ENCODE measurements at regions of chr4 and their contacts with region 1.

Region 1: GRCh38 chr4:37802068-37802666 is 24.3 kb upstream of the PGM2 start:
- DNase-seq: peak; percentile 63 to 75
- H3K4me3 ChIP-seq: no peak overlapping the region
- H3K27ac ChIP-seq: no peak overlapping the region
- H3K4me1 ChIP-seq: peaks cover 6% of the 10 kb centered on the region; the same call in 1 of the 2 replicates
- H3K27me3 ChIP-seq: no peaks in the 10 kb centered on the region
- CTCF ChIP-seq: peak; percentile 65

Region 2: DNA sequence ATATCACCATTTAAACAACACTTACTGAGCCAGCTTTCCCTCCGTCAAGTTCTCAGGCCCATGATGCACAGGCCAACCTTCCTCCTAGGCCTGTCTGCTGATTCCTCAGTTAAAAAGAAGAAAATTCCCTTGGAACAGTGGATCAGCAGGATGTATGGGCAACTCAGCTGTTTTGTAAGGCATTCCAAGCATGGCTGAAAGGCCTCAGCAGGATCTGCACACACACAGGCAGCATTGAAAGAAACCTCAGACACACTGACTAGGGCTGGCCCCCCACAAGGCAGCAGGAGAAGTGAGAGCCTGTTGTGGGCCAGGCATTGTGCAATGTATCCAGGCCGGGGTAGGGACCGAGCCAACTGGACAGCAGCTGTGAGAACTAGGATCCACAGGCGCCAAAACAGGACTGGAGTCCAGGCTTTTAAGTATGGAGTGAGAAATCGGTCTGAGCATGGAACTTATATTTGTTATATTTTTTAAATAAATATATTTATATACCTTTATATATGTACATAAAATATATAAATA is 386.3 kb before region 1 on chr4:
- CTCF ChIA-PET with region 1: no interaction called
- POLR2A ChIA-PET with region 1: no interaction called
- intact Hi-C with region 1: no loop called
- DNase-seq: no peak
- H3K4me3 ChIP-seq: no peak overlapping the region
- H3K27ac ChIP-seq: no peak overlapping the region
- H3K4me1 ChIP-seq: no peaks in the 10 kb centered on the region
- H3K27me3 ChIP-seq: no peaks in the 10 kb centered on the region
- CTCF ChIP-seq: no peak

Region 3: DNA sequence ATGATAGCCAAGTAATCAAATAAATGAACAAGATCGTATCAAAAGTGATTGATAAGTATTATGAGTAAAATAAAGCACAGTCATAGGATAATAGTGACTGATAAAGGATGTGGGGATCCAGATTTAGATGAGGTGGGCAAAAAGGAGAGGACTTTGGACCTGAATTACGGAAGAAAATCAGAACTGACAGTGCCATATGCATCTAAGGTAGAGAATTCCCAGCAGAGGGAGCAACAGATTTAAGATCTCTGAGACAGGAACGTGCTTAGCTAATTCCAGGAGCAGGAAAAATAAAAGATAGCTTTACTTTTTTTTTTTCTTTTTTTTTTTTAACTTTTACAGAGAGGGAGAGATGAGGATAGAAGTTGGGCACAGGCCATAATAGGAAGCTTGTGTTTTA is 367.7 kb before region 1 on chr4:
- CTCF ChIA-PET with region 1: interaction called, 4 read pairs
- POLR2A ChIA-PET with region 1: no interaction called
- intact Hi-C with region 1: loop called (anchors 5 kb)
- DNase-seq: no peak
- H3K4me3 ChIP-seq: no peak overlapping the region
- H3K27ac ChIP-seq: no peak overlapping the region
- H3K4me1 ChIP-seq: peaks cover 12% of the 10 kb centered on the region
- H3K27me3 ChIP-seq: no peaks in the 10 kb centered on the region
- CTCF ChIP-seq: peak; percentile 40

Region 4: DNA sequence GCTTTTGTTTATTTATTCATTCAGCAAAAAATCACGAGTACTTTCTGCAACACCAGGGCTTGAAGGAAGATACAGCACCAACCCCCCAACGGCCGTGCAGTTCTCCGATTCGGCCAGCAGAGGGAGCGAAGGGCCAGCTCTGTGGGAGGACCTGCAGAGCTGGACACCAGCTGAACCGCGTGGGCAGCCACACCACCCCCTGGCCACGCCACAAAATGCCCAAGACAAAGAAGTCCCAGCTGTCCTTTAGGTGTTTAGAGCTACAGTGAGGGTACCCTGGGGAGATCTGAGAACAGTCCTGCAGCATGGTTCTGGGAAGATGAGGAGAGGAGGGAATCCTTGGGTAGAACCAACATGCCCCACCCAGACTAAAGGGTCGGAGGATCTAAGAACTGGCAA is 199.1 kb before region 1 on chr4:
- CTCF ChIA-PET with region 1: interaction called, 25 read pairs
- POLR2A ChIA-PET with region 1: no interaction called
- intact Hi-C with region 1: loop called (anchors 1 kb)
- DNase-seq: peak; percentile 46 to 73
- H3K4me3 ChIP-seq: no peak overlapping the region
- H3K27ac ChIP-seq: no peak overlapping the region
- H3K4me1 ChIP-seq: peaks cover 9% of the 10 kb centered on the region
- H3K27me3 ChIP-seq: no peaks in the 10 kb centered on the region
- CTCF ChIP-seq: peak; percentile 98

Region 5: GRCh38 chr4:37686373-37687193 is 115.6 kb before region 1 on chr4 and contains the start of gene RELL1:
- CTCF ChIA-PET with region 1: no interaction called
- POLR2A ChIA-PET with region 1: no interaction called
- intact Hi-C with region 1: loop called (anchors 2 kb)
- DNase-seq: peak; percentile 94 to 100
- H3K4me3 ChIP-seq: peak within 1 kb of the TSS; percentile 77
- H3K27ac ChIP-seq: no peak within 1 kb of the TSS
- H3K4me1 ChIP-seq: peaks cover 12% of the 10 kb centered on the region; the same call in 1 of the 2 replicates
- H3K27me3 ChIP-seq: no peaks in the 10 kb centered on the region
- CTCF ChIP-seq: no peak
- total RNA-seq, gene RELL1: 11.9 and 18.5 TPM in 2 replicates

Region 6: GRCh38 chr4:37816769-37817168 is 14.6 kb after region 1 on chr4:
- CTCF ChIA-PET with region 1: no interaction called
- POLR2A ChIA-PET with region 1: no interaction called
- intact Hi-C with region 1: no loop called
- DNase-seq: no peak
- H3K4me3 ChIP-seq: no peak overlapping the region
- H3K27ac ChIP-seq: no peak overlapping the region
- H3K4me1 ChIP-seq: no peaks in the 10 kb centered on the region
- H3K27me3 ChIP-seq: no peaks in the 10 kb centered on the region
- CTCF ChIP-seq: no peak

Region 7: GRCh38 chr4:37891260-37892159 is 89.3 kb after region 1 on chr4:
- CTCF ChIA-PET with region 1: no interaction called
- POLR2A ChIA-PET with region 1: no interaction called
- intact Hi-C with region 1: loop called (anchors 2 kb)
- DNase-seq: peak in 1 of 2 experiments; percentile 49
- H3K4me3 ChIP-seq: peak overlapping the region; percentile 64
- H3K27ac ChIP-seq: no peak overlapping the region
- H3K4me1 ChIP-seq: no peaks in the 10 kb centered on the region; the same call in 1 of the 2 replicates
- H3K27me3 ChIP-seq: no peaks in the 10 kb centered on the region
- CTCF ChIP-seq: no peak

Region 8: DNA sequence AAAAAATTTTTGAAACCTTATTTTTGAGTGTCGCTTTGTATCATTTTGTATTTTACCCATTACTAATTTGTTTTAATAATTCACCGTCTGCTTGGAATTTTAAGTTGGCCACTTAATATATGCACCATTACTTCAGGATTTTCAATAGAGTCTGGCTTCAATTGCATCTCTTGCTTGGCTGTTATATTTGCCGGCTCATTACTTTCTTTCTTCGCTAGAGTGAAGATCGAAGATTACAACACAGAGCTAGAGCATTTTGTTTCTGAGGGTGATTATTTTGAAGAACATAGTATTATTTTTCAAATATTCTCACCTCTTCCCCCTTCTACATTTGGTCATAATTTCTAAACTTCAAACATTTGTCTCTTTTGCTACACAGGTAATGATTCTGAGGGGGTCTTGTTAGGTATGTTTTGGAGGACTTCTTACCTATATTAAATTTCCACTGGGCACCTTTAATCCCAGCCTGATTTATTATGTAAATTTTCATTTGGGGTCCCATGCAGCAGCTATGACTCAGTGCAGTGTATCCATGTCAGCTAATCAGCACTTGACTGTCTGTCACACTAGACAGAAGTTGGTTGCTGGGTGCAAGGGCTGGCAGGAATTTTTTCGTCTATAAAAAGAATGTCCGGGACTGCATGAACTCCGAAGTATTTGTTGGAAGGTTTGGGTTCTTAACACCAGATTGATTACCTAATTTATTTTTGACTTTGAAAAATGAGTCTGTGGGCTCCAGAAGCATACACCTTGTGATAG is 107.3 kb after region 1 on chr4:
- CTCF ChIA-PET with region 1: no interaction called
- POLR2A ChIA-PET with region 1: no interaction called
- intact Hi-C with region 1: no loop called
- DNase-seq: no peak
- H3K4me3 ChIP-seq: no peak overlapping the region
- H3K27ac ChIP-seq: no peak overlapping the region
- H3K4me1 ChIP-seq: no peaks in the 10 kb centered on the region
- H3K27me3 ChIP-seq: no peaks in the 10 kb centered on the region
- CTCF ChIP-seq: no peak

Region 9: GRCh38 chr4:38034986-38035882 is 233.1 kb after region 1 on chr4:
- CTCF ChIA-PET with region 1: no interaction called
- POLR2A ChIA-PET with region 1: no interaction called
- intact Hi-C with region 1: loop called (anchors 1 kb)
- DNase-seq: peak; percentile 10 to 48
- H3K4me3 ChIP-seq: no peak overlapping the region
- H3K27ac ChIP-seq: no peak overlapping the region
- H3K4me1 ChIP-seq: no peaks in the 10 kb centered on the region
- H3K27me3 ChIP-seq: no peaks in the 10 kb centered on the region
- CTCF ChIP-seq: peak; percentile 85

Region 10: GRCh38 chr4:38114386-38115150 is 312.4 kb after region 1 on chr4:
- CTCF ChIA-PET with region 1: no interaction called
- POLR2A ChIA-PET with region 1: no interaction called
- intact Hi-C with region 1: no loop called
- DNase-seq: no peak
- H3K4me3 ChIP-seq: no peak overlapping the region
- H3K27ac ChIP-seq: no peak overlapping the region
- H3K4me1 ChIP-seq: peaks cover 12% of the 10 kb centered on the region
- H3K27me3 ChIP-seq: no peaks in the 10 kb centered on the region
- CTCF ChIP-seq: no peak

Region 11: DNA sequence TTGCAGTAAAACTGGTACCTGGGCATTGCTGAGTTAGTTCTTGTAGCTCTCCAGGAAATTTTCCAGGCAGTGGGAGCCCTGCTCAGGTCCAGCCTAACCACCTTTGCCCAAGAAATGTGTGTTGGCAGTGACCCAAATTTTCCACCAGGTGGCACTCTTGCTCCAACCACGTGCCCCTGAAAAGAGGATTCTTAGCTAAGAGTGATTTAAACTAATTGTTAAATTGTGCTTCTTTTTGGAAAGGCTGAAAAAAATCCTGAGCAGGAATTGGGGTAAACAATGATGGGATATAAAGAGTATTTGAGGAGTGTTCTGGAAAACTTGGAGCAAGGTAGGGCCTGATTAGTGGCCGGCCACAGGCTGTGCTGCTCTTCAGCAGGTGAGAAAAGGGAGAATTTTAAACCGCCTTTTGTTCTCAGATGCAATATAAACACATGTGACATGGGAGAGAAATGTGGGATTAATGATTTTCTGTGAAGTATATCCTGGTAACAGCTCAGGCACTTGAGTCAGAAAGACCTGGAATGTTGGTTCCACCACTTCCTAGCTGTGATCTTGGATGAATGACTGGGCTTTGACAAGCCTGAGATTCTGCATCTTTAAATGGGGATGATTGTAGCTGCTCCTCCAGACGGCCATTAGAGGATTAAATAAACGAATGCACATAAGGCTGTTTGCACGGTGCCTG is 377.7 kb after region 1 on chr4:
- CTCF ChIA-PET with region 1: no interaction called
- POLR2A ChIA-PET with region 1: interaction called, 4 read pairs
- intact Hi-C with region 1: loop called (anchors 10 kb)
- DNase-seq: peak; percentile 82
- H3K4me3 ChIP-seq: no peak overlapping the region
- H3K27ac ChIP-seq: peak overlapping the region; percentile 86
- H3K4me1 ChIP-seq: peaks cover 30% of the 10 kb centered on the region
- H3K27me3 ChIP-seq: no peaks in the 10 kb centered on the region
- CTCF ChIP-seq: peak; percentile 98

Measured in PC-9 (cell line).